ENCODE measurements at regions of chr2 and their contacts with region 1.

Region 1: GRCh38 chr2:230721712-230722111 is 9.1 kb downstream of the CAB39 start:
- DNase-seq: no peak
- ATAC-seq: peak; percentile 55
- H3K4me3 ChIP-seq: peak overlapping the region; percentile 45; the same call in 1 of the 2 replicates
- H3K27ac ChIP-seq: peak overlapping the region; percentile 65
- H3K4me1 ChIP-seq: peaks cover 34% of the 10 kb centered on the region
- H3K27me3 ChIP-seq: no peaks in the 10 kb centered on the region
- CTCF ChIP-seq: no peak
- EP300 ChIP-seq: no peak
- POLR2A ChIP-seq: no peak
- RAD21 ChIP-seq: no peak

Region 2: DNA sequence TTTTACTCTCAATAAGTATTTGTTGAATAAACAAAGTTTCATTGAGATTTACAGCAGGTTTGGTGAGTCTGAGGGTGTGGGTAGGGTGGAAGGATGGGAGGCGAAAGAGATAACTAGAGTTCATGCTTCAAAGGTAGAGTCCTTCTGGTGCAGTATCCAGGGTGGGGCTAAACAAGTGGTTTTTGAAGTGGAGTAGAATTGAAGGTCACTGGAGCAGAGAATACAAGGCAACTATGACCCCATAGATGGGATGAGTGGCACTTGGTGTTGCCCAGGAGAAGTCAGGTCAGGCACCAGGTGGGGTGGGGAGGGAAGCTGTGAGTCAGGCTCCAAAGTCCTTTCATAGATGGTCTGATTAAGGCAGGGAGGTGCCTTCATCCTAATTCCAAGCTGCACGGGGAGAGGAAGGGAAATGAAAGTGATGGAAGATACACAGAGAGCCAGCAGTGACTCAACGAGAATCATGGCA is 15.6 kb before region 1 on chr2:
- CTCF ChIA-PET with region 1: no interaction called
- POLR2A ChIA-PET with region 1: no interaction called
- RAD21 ChIA-PET with region 1: no interaction called
- SMC1A ChIA-PET with region 1: no interaction called
- in situ Hi-C with region 1: no loop called
- intact Hi-C with region 1: no loop called
- DNase-seq: no peak
- ATAC-seq: no peak
- H3K4me3 ChIP-seq: no peak overlapping the region
- H3K27ac ChIP-seq: no peak overlapping the region
- H3K4me1 ChIP-seq: no peaks in the 10 kb centered on the region
- H3K27me3 ChIP-seq: no peaks in the 10 kb centered on the region
- CTCF ChIP-seq: no peak
- EP300 ChIP-seq: no peak
- POLR2A ChIP-seq: no peak
- RAD21 ChIP-seq: no peak

Region 3: GRCh38 chr2:230732914-230733401 is 11.2 kb after region 1 on chr2:
- CTCF ChIA-PET with region 1: interaction called, 12 read pairs
- POLR2A ChIA-PET with region 1: interaction called, 7 read pairs
- RAD21 ChIA-PET with region 1: interaction called, 3 read pairs
- SMC1A ChIA-PET with region 1: interaction called, 18 read pairs
- in situ Hi-C with region 1: no loop called
- intact Hi-C with region 1: no loop called
- DNase-seq: no peak
- ATAC-seq: no peak
- H3K4me3 ChIP-seq: no peak overlapping the region
- H3K27ac ChIP-seq: no peak overlapping the region
- H3K4me1 ChIP-seq: peaks cover 22% of the 10 kb centered on the region
- H3K27me3 ChIP-seq: no peaks in the 10 kb centered on the region
- CTCF ChIP-seq: no peak
- EP300 ChIP-seq: no peak
- POLR2A ChIP-seq: no peak
- RAD21 ChIP-seq: no peak

Region 4: DNA sequence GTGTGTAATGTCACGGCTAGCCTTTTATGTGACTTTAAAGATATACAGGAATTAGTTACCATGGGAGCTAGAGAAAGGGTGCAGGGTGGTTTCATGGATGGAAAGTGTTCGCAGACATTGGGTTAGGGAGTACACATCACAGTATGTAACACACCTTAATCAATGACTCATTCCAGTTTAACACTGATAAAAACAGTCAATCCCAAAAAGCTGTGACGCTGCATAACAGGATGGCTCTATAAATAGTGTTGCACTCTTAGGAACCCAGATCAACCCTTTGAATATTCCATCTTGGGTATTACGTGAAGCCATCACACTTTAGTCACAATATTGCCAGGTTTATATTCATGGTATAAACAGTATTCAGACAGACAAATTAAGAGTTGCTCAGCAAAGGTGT is 24.5 kb after region 1 on chr2:
- CTCF ChIA-PET with region 1: interaction called, 4 read pairs
- POLR2A ChIA-PET with region 1: interaction called, 3 read pairs
- RAD21 ChIA-PET with region 1: no interaction called
- SMC1A ChIA-PET with region 1: interaction called, 15 read pairs
- in situ Hi-C with region 1: no loop called
- intact Hi-C with region 1: no loop called
- DNase-seq: no peak
- ATAC-seq: no peak
- H3K4me3 ChIP-seq: no peak overlapping the region
- H3K27ac ChIP-seq: no peak overlapping the region
- H3K4me1 ChIP-seq: no peaks in the 10 kb centered on the region
- H3K27me3 ChIP-seq: no peaks in the 10 kb centered on the region
- CTCF ChIP-seq: no peak
- EP300 ChIP-seq: no peak
- POLR2A ChIP-seq: no peak
- RAD21 ChIP-seq: no peak

Region 5: GRCh38 chr2:230852113-230852512 is 130.4 kb after region 1 on chr2:
- CTCF ChIA-PET with region 1: no interaction called
- POLR2A ChIA-PET with region 1: no interaction called
- RAD21 ChIA-PET with region 1: no interaction called
- SMC1A ChIA-PET with region 1: no interaction called
- in situ Hi-C with region 1: no loop called
- intact Hi-C with region 1: no loop called
- DNase-seq: no peak
- ATAC-seq: no peak
- H3K4me3 ChIP-seq: no peak overlapping the region
- H3K27ac ChIP-seq: no peak overlapping the region
- H3K4me1 ChIP-seq: peaks cover 5% of the 10 kb centered on the region; the same call in 1 of the 2 replicates
- H3K27me3 ChIP-seq: peaks cover 0 to 3% of the 10 kb centered on the region in 2 experiments; a peak in 1 of 4 replicates
- CTCF ChIP-seq: no peak
- EP300 ChIP-seq: no peak
- POLR2A ChIP-seq: no peak
- RAD21 ChIP-seq: no peak

Measured in GM12878 (cell line).